H1 (cell line): ENCODE measurements at regions of chr1 and their contacts with region 1.

Region 1: GRCh38 chr1:4778056-4778455 is 123.6 kb downstream of the AJAP1 start:
- DNase-seq: peak in 1 of 2 experiments; percentile 58
- H3K4me3 ChIP-seq: no peak overlapping the region
- H3K27ac ChIP-seq: no peak overlapping the region
- H3K4me1 ChIP-seq: no peaks in the 10 kb centered on the region; a peak in 1 of 7 replicates
- H3K27me3 ChIP-seq: no peaks in the 10 kb centered on the region
- CTCF ChIP-seq: peak; percentile 59 to 68 (median 64)
- EP300 ChIP-seq: no peak
- POLR2A ChIP-seq: no peak
- RAD21 ChIP-seq: peak; percentile 60 to 74

Region 2: GRCh38 chr1:4794020-4794780 is 16.1 kb after region 1 on chr1:
- CTCF ChIA-PET with region 1: interaction called, 14 read pairs
- POLR2A ChIA-PET with region 1: no interaction called
- DNase-seq: no peak
- H3K4me3 ChIP-seq: no peak overlapping the region
- H3K27ac ChIP-seq: no peak overlapping the region
- H3K4me1 ChIP-seq: no peaks in the 10 kb centered on the region
- H3K27me3 ChIP-seq: no peaks in the 10 kb centered on the region
- CTCF ChIP-seq: no peak
- EP300 ChIP-seq: no peak
- POLR2A ChIP-seq: no peak
- RAD21 ChIP-seq: no peak